ENCODE measurements at regions of chr1 and their contacts with region 1.

Region 1: GRCh38 chr1:205313563-205314308 is 7.8 kb downstream of the NUAK2 start:
- DNase-seq: peak; percentile 66
- H3K4me3 ChIP-seq: peak overlapping the region; percentile 36
- H3K27ac ChIP-seq: peak overlapping the region; percentile 89
- H3K27me3 ChIP-seq: no peaks in the 10 kb centered on the region
- CTCF ChIP-seq: no peak

Region 2: GRCh38 chr1:205273551-205273982 is 40.2 kb before region 1 on chr1:
- CTCF ChIA-PET with region 1: interaction called, 603 read pairs
- POLR2A ChIA-PET with region 1: interaction called, 8 read pairs
- DNase-seq: no peak
- H3K4me3 ChIP-seq: no peak overlapping the region
- H3K27ac ChIP-seq: no peak overlapping the region
- H3K27me3 ChIP-seq: no peaks in the 10 kb centered on the region
- CTCF ChIP-seq: peak; percentile 97

Region 3: GRCh38 chr1:205300886-205301821 is 12.6 kb before region 1 on chr1:
- CTCF ChIA-PET with region 1: no interaction called
- POLR2A ChIA-PET with region 1: interaction called, 10 read pairs
- DNase-seq: peak; percentile 92
- H3K4me3 ChIP-seq: peak overlapping the region; percentile 25; the same call in 1 of the 2 replicates
- H3K27ac ChIP-seq: peak overlapping the region; percentile 100
- H3K27me3 ChIP-seq: no peaks in the 10 kb centered on the region
- CTCF ChIP-seq: no peak

Region 4: GRCh38 chr1:205919026-205919746 is 605.5 kb after region 1 on chr1:
- CTCF ChIA-PET with region 1: no interaction called
- POLR2A ChIA-PET with region 1: no interaction called
- DNase-seq: peak; percentile 60
- H3K4me3 ChIP-seq: no peak overlapping the region
- H3K27ac ChIP-seq: no peak overlapping the region
- H3K27me3 ChIP-seq: peaks cover 9% of the 10 kb centered on the region
- CTCF ChIP-seq: peak; percentile 93